CD4-positive, alpha-beta memory T cell (primary cell): ENCODE measurements at regions of chr17 and their contacts with region 1.

Region 1: DNA sequence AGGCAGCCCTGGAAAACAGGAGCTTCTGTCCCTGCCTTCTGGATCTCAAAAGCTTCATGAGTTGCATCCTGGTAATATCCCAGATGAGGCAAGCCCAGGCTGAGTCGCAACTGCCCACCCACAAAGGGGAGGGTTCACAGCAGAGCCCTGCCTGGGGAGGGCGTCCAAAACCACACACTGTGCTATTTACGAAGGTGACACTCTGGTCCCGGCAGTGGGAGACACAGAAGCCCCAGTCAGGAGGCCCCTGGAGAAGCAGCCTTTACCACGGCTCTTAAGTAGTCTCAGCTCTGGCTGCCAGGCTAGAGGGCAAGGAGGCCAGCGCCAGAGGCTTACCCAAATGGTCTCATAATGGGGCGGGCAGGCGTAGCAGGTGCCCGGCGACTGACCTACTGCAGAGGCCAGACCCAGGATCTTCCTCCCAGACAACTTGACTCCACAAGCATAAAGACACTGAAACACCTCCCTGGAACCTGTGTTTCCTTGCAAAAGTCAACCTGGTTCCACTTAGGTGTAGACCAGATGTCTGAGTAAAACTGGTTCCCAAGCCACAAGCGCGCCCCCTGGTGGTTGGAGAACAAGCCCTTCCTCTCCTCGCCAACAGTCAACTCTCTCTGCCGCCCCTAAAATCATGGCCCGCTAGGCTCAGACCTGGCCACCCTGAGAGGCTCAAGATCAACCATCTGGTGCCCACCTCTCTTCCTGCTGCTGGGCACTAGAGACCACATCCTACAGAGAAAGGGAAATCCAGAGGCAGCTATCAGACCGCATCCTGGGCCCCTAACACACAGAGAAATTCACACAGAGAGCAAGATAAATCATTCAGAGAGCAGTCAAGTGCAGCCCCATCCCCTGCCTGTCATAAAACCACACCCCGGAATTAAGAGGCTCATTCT is 5.2 kb downstream of the AXIN2 start:
- DNase-seq: peak; percentile 86 to 89 (median 87)
- H3K4me3 ChIP-seq: peak overlapping the region; percentile 5 to 48
- H3K4me3 Mint-ChIP-seq: no peak overlapping the region
- H3K27ac ChIP-seq: peak overlapping the region; percentile 42
- H3K27ac Mint-ChIP-seq: no peak overlapping the region
- H3K4me1 ChIP-seq: peaks cover 27% of the 10 kb centered on the region
- H3K4me1 Mint-ChIP-seq: peaks cover 19 to 31% (median 25%) of the 10 kb centered on the region in 4 donors
- H3K27me3 ChIP-seq: no peaks in the 10 kb centered on the region
- H3K27me3 Mint-ChIP-seq: no peaks in the 10 kb centered on the region

Region 2: DNA sequence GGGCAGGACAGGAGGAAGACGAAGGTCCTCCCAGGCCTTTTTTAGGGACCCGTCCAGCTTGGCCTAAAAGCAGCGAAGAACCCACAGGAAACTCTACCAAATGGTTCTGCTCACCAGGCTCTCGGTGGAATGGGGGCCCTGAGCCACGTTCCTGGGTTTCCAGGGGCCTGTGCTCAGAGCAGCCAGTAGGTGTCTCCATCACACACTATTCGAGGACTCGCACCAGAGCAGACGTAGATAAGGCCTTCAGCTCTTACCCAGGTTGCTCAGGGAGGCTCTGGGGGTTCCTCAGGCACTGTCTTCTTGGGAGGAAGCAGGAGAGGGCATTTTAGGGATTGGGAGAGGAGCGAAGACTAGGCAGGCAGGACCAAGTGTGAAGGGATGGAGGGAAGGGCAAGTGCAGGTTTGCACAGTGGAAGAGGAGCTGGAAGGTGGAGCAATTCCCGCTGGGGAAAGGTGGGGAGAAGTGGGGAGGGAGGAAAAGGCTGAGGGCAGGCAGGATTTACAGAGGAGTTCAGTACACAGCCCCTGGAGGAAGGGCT is 262.0 kb before region 1 on chr17:
- CTCF ChIA-PET with region 1: interaction called, 32 read pairs
- POLR2A ChIA-PET with region 1: interaction called, 3 read pairs
- intact Hi-C with region 1: loop called (anchors 1 kb)
- DNase-seq: peak; percentile 49 to 61 (median 55)
- H3K4me3 ChIP-seq: no peak overlapping the region
- H3K4me3 Mint-ChIP-seq: no peak overlapping the region
- H3K27ac ChIP-seq: no peak overlapping the region
- H3K27ac Mint-ChIP-seq: peak overlapping the region in 1 of 7 donors; percentile 7
- H3K4me1 ChIP-seq: no peaks in the 10 kb centered on the region
- H3K4me1 Mint-ChIP-seq: peaks cover 0 to 6% (median 4%) of the 10 kb centered on the region in 4 donors
- H3K27me3 ChIP-seq: no peaks in the 10 kb centered on the region
- H3K27me3 Mint-ChIP-seq: peaks cover 0 to 2% of the 10 kb centered on the region in 2 donors

Region 3: GRCh38 chr17:65455972-65456343 is 100.3 kb before region 1 on chr17:
- CTCF ChIA-PET with region 1: interaction called, 4 read pairs
- POLR2A ChIA-PET with region 1: no interaction called
- intact Hi-C with region 1: loop called (anchors 1 kb)
- DNase-seq: peak in 4 of 5 donors; percentile 26 to 40 (median 28)
- H3K4me3 ChIP-seq: no peak overlapping the region
- H3K4me3 Mint-ChIP-seq: peak overlapping the region in 1 of 8 donors; percentile 4
- H3K27ac ChIP-seq: no peak overlapping the region
- H3K27ac Mint-ChIP-seq: peak overlapping the region in 2 of 7 donors; percentile 10 to 42
- H3K4me1 ChIP-seq: peaks cover 3% of the 10 kb centered on the region
- H3K4me1 Mint-ChIP-seq: peaks cover 0 to 6% (median 2%) of the 10 kb centered on the region in 4 donors
- H3K27me3 ChIP-seq: no peaks in the 10 kb centered on the region
- H3K27me3 Mint-ChIP-seq: no peaks in the 10 kb centered on the region

Region 4: DNA sequence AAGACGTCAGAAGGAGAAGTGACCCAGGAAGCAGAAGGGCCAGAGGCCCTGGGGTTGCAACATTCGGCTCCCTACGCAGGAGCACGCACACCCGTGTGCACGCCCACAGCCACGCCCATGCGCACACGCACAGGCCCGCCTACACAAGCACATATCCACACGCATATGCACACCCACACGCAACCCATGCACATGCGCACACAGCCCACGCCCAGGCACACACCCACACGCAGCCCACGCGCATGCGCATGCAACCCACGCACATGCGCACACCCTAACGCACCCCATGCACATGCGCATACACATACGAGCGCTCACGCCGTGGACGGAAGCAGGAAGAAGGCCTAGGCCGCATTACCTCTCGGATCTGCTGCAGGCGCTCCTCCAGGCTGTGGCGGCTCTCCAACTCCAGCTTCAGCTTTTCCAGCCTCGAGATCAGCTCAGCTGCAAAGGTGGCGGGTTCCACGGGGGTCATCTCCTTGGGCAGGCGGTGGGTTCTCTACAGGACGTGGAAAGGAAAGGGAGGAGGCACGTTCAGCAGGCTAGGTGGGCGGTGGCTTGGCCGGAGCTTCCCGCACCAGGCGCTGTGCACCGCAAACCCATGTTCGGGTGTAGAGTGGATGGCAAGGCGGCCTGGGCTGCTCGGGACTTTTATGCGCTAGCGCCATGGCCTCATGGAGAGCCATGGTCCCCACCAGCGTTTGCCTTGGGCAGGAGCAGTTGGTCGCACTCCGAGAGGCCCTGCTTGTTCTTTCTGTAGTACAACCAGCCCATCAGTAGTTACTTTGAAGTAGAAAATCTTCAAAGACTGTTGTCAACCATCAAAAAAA is 18.2 kb before region 1 on chr17:
- CTCF ChIA-PET with region 1: interaction called, 9 read pairs
- POLR2A ChIA-PET with region 1: interaction called, 9 read pairs
- intact Hi-C with region 1: loop called (anchors 2 kb)
- DNase-seq: peak; percentile 56 to 82 (median 80)
- H3K4me3 ChIP-seq: peak overlapping the region in 1 of 2 donors; percentile 52
- H3K4me3 Mint-ChIP-seq: peak overlapping the region; percentile 7 to 87 (median 76)
- H3K27ac ChIP-seq: peak overlapping the region; percentile 40
- H3K27ac Mint-ChIP-seq: peak overlapping the region; percentile 70 to 90 (median 78)
- H3K4me1 ChIP-seq: peaks cover 20% of the 10 kb centered on the region
- H3K4me1 Mint-ChIP-seq: peaks cover 21 to 36% (median 30%) of the 10 kb centered on the region in 4 donors
- H3K27me3 ChIP-seq: no peaks in the 10 kb centered on the region
- H3K27me3 Mint-ChIP-seq: no peaks in the 10 kb centered on the region

Region 5: GRCh38 chr17:65794572-65794971 is 238.3 kb after region 1 on chr17:
- CTCF ChIA-PET with region 1: interaction called, 9 read pairs
- POLR2A ChIA-PET with region 1: no interaction called
- intact Hi-C with region 1: loop called (anchors 2 kb)
- DNase-seq: peak in 4 of 5 donors; percentile 11 to 18 (median 13)
- H3K4me3 ChIP-seq: no peak overlapping the region
- H3K4me3 Mint-ChIP-seq: no peak overlapping the region
- H3K27ac ChIP-seq: no peak overlapping the region
- H3K27ac Mint-ChIP-seq: no peak overlapping the region
- H3K4me1 ChIP-seq: no peaks in the 10 kb centered on the region
- H3K4me1 Mint-ChIP-seq: no peaks in the 10 kb centered on the region
- H3K27me3 ChIP-seq: no peaks in the 10 kb centered on the region
- H3K27me3 Mint-ChIP-seq: no peaks in the 10 kb centered on the region